ENCODE measurements at regions of chr9 and their contacts with region 1.

Region 1: GRCh38 chr9:35646533-35647265 is 4.0 kb downstream of the SIT1 start:
- DNase-seq: peak; percentile 96
- H3K4me3 ChIP-seq: peak overlapping the region; percentile 38 to 63 (median 56)
- H3K27ac ChIP-seq: peak overlapping the region; percentile 77 to 90 (median 87)
- H3K4me1 ChIP-seq: peaks cover 0 to 13% (median 11%) of the 10 kb centered on the region in 4 donors
- H3K27me3 ChIP-seq: no peaks in the 10 kb centered on the region
- CTCF ChIP-seq: peak; percentile 93 to 98 (median 95)
- EP300 ChIP-seq: peak in 1 of 4 donors; percentile 10
- POLR2A ChIP-seq: peak; percentile 86 to 91

Region 2: DNA sequence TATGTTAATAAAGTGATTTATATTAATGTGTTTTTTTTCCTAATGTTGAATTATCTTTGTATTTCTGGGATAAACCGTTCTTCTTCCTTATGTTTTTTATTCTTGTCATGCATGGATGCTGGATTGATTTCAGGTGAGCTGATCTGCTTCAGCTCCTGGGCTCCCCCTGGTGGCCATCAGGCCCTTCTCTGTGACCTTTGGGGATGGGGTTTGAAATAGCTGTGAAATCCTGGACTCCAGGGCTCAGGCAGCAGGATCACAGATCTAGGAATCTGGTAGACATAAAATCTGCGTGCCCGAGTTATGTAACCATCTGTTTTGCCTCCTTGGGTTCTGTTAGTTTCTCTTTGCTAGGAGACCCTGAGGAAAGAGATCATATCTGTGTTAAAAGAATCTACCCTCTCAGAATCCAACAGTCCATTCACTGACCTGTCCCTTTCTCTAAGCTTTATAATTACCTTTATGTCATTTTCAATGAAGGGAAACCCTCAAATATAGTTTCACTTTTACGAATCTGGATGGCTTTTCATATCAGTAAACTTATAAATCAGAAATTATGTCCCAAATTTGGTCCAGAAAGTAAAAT is 235.7 kb after region 1 on chr9:
- intact Hi-C with region 1: loop called (anchors 10 kb)
- DNase-seq: peak; percentile 92
- H3K4me3 ChIP-seq: no peak overlapping the region
- H3K27ac ChIP-seq: no peak overlapping the region
- H3K4me1 ChIP-seq: no peaks in the 10 kb centered on the region
- H3K27me3 ChIP-seq: no peaks in the 10 kb centered on the region
- CTCF ChIP-seq: peak; percentile 89 to 96 (median 94)
- EP300 ChIP-seq: no peak
- POLR2A ChIP-seq: no peak